ENCODE measurements at regions of chr19 and their contacts with region 1.

Region 1: GRCh38 chr19:58362272-58362994 is at the start of gene ZNF497:
- DNase-seq: peak; percentile 79
- ATAC-seq: peak; percentile 94
- H3K4me3 ChIP-seq: peak within 1 kb of the TSS; percentile 60 to 95
- H3K27ac ChIP-seq: peak within 1 kb of the TSS; percentile 96
- H3K4me1 ChIP-seq: peaks cover 6% of the 10 kb centered on the region; the same call in 1 of the 2 replicates
- H3K27me3 ChIP-seq: no peaks in the 10 kb centered on the region
- CTCF ChIP-seq: no peak
- total RNA-seq, gene ZNF497: 1.9 TPM

Region 2: GRCh38 chr19:58296104-58296503 is 66.3 kb before region 1 on chr19:
- CTCF ChIA-PET with region 1: no interaction called
- POLR2A ChIA-PET with region 1: no interaction called
- in situ Hi-C with region 1: no loop called
- intact Hi-C with region 1: no loop called
- DNase-seq: no peak
- ATAC-seq: no peak
- H3K4me3 ChIP-seq: no peak overlapping the region
- H3K27ac ChIP-seq: no peak overlapping the region
- H3K4me1 ChIP-seq: no peaks in the 10 kb centered on the region
- H3K27me3 ChIP-seq: no peaks in the 10 kb centered on the region
- CTCF ChIP-seq: no peak

Region 3: GRCh38 chr19:58346961-58347931 is 15.2 kb before region 1 on chr19:
- CTCF ChIA-PET with region 1: no interaction called
- POLR2A ChIA-PET with region 1: interaction called, 16 read pairs
- in situ Hi-C with region 1: no loop called
- intact Hi-C with region 1: no loop called
- DNase-seq: no peak
- ATAC-seq: peak; percentile 98
- H3K4me3 ChIP-seq: peak overlapping the region; percentile 63 to 97
- H3K27ac ChIP-seq: peak overlapping the region; percentile 72
- H3K4me1 ChIP-seq: peaks cover 8% of the 10 kb centered on the region; the same call in 1 of the 2 replicates
- H3K27me3 ChIP-seq: no peaks in the 10 kb centered on the region
- CTCF ChIP-seq: no peak

Region 4: GRCh38 chr19:58380722-58381466 is 18.5 kb after region 1 on chr19 and contains the start of gene ZNF837:
- CTCF ChIA-PET with region 1: no interaction called
- POLR2A ChIA-PET with region 1: interaction called, 15 read pairs
- in situ Hi-C with region 1: no loop called
- intact Hi-C with region 1: no loop called
- DNase-seq: peak; percentile 98
- ATAC-seq: peak; percentile 93
- H3K4me3 ChIP-seq: peak within 1 kb of the TSS; percentile 64 to 94
- H3K27ac ChIP-seq: peak within 1 kb of the TSS; percentile 89
- H3K4me1 ChIP-seq: peaks cover 28% of the 10 kb centered on the region
- H3K27me3 ChIP-seq: no peaks in the 10 kb centered on the region
- CTCF ChIP-seq: no peak
- total RNA-seq, gene ZNF837: 1.6 TPM

Region 5: DNA sequence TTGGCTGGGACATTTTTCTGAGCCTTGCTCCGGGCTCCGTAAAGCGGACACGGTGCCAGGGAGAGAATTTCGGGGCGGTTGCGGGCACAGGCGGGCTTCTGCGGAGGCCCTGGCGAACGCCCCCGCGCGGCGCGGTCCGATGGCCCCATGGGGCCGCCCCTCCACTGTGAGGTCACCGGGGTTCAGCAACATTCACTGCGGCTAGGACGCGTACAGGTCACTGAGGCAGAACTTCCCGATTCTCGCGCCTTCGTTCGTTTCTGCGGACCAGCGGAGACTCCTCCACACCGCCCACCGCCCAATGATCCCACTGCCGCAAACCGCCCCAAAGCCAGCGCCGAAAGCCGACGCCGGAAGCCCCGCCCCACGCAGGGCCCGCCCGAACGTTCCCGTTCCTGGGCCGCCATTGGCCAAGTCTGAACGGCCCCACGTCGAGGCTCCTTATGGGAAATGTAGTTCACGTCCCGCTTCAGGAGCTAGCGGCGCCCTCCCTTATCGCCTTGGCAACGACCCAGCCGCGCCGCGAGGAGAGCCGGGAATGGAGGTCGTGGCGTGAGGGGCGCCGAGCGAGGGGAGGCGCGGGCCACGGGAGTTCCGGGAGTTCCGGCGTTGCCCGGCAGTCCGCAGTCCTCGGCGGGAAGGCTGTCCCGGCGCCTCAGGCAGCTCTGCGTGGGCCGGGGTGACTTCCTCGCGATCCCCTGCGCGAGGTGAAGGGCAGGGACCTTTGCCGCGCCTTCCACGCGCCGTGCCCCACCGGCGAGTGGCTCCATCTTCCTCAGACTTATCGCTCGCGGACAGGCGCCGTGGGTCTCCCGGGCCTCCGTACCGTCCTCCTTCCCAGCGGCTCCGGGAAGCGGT is 45.9 kb after region 1 on chr19 and contains the start of gene ZNF584:
- CTCF ChIA-PET with region 1: interaction called, 7 read pairs
- POLR2A ChIA-PET with region 1: interaction called, 13 read pairs
- in situ Hi-C with region 1: no loop called
- intact Hi-C with region 1: no loop called
- DNase-seq: peak; percentile 56
- ATAC-seq: peak; percentile 95
- H3K4me3 ChIP-seq: peak within 1 kb of the TSS; percentile 86 to 97
- H3K27ac ChIP-seq: peak within 1 kb of the TSS; percentile 96
- H3K4me1 ChIP-seq: peaks cover 23% of the 10 kb centered on the region
- H3K27me3 ChIP-seq: no peaks in the 10 kb centered on the region
- CTCF ChIP-seq: no peak
- total RNA-seq, gene ZNF584: 29.0 TPM

Region 6: DNA sequence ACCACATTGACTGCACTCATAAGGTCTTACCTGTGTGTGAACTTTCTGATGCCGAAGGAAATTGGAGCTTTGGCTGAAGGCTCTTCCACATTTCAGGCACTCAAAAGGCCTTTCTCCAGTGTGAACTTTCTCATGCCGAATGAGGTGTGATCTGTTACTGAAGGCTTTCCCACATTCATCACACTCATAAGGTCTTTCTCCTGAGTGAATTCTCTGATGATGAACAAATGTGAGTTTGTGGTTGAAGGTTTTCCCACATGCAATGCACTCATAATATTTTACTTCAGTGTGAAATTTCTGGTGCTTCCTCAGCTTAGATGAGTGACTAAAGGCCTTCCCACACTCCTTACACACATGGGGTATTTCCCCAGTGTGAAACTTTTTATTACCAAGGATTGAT is 71.8 kb after region 1 on chr19:
- CTCF ChIA-PET with region 1: no interaction called
- POLR2A ChIA-PET with region 1: no interaction called
- in situ Hi-C with region 1: no loop called
- intact Hi-C with region 1: no loop called
- DNase-seq: no peak
- ATAC-seq: no peak
- H3K4me3 ChIP-seq: no peak overlapping the region
- H3K27ac ChIP-seq: no peak overlapping the region
- H3K4me1 ChIP-seq: no peaks in the 10 kb centered on the region
- H3K27me3 ChIP-seq: no peaks in the 10 kb centered on the region
- CTCF ChIP-seq: no peak